Breast epithelium (tissue), 4 donors: ENCODE measurements at regions of chr15 and their contacts with region 1.

Region 1: DNA sequence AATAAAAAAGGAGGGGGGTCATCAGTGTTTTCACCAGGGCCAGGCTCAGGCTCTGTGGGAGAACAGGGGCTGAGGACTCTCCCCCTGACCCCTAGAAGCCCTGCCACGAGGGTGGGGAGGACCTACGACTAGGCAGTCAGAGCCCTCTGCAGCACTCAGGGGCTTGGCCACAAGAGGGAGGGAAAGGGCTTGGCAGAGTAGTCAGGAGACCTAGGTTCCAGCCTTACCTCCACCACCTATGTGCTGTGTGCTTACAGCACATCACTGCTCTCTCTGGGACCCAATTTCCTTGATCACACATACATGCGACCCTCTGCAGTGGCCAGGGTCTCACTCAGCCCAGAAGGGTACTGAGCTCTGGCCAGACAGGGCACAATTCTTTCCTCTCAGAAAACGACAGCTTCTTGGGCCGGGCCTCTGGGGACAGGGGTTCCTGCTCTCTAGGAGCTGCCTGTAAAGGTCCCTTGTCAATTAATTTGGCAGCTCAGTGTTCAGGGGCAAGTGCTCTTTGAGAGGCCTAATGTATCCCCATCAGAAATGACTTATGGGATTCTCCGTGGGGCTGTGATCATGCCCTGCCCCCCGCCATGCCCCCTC is 16.4 kb upstream of the SKIC8 start:
- DNase-seq: no peak
- H3K4me3 ChIP-seq: no peak overlapping the region
- H3K27ac ChIP-seq: no peak overlapping the region
- H3K4me1 ChIP-seq: no peaks in the 10 kb centered on the region
- H3K27me3 ChIP-seq: no peaks in the 10 kb centered on the region
- CTCF ChIP-seq: no peak
- POLR2A ChIP-seq: no peak

Region 2: DNA sequence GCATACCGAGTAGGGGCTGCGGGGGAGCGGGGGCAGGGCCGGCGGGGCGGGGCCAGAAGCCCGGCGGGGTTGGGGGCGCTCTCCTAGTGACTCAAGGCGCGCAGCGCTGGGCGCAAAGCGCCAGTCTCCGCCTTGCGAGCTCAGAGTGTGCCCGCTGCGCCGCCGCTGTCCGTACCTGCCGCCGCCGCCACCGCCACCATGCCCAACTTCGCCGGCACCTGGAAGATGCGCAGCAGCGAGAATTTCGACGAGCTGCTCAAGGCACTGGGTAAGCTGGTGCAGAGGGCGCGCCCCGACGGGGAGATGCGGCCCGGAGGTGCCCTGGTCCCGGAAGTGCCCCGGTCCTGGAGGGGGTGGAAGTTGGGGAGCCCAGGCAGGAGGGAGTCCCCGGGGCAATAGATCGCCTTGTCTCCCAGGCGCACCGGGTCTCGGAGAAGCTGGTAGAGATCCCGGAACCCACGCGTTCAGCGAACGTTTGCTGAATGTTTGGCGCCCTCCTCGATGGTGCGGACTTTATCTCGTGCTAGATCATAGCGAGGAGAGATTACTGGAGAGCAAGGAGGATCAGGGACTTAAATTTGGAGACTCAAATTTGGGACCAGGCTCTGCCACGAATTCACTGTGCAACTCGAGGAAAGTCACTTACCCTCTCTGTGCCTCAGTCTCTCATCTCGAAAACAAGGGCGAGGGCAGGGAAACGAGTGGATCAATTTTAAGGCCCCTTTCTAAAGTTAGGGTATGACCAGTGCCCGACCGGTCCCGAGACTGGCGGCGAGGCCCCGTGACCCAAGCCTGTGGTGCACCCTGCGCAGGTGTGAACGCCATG is 24.7 kb after region 1 on chr15 and contains the start of gene CRABP1:
- intact Hi-C with region 1: no loop called
- DNase-seq: no peak
- H3K4me3 ChIP-seq: peak within 1 kb of the TSS in 2 of 3 donors; percentile 52 to 64
- H3K27ac ChIP-seq: no peak within 1 kb of the TSS
- H3K4me1 ChIP-seq: no peaks in the 10 kb centered on the region
- H3K27me3 ChIP-seq: peaks cover 0 to 34% of the 10 kb centered on the region in 2 donors
- CTCF ChIP-seq: no peak
- POLR2A ChIP-seq: no peak
- total RNA-seq, gene CRABP1: 11.5 to 14.5 TPM in 2 of 3 donors, not detected in the other

Region 3: GRCh38 chr15:78422571-78423340 is 107.0 kb after region 1 on chr15:
- intact Hi-C with region 1: loop called (anchors 10 kb)
- DNase-seq: peak; percentile 33 to 63
- H3K4me3 ChIP-seq: no peak overlapping the region
- H3K27ac ChIP-seq: no peak overlapping the region
- H3K4me1 ChIP-seq: no peaks in the 10 kb centered on the region
- H3K27me3 ChIP-seq: no peaks in the 10 kb centered on the region
- CTCF ChIP-seq: peak; percentile 74 to 88 (median 75)
- POLR2A ChIP-seq: no peak